ENCODE measurements at regions of chr7 and their contacts with region 1.

Region 1: DNA sequence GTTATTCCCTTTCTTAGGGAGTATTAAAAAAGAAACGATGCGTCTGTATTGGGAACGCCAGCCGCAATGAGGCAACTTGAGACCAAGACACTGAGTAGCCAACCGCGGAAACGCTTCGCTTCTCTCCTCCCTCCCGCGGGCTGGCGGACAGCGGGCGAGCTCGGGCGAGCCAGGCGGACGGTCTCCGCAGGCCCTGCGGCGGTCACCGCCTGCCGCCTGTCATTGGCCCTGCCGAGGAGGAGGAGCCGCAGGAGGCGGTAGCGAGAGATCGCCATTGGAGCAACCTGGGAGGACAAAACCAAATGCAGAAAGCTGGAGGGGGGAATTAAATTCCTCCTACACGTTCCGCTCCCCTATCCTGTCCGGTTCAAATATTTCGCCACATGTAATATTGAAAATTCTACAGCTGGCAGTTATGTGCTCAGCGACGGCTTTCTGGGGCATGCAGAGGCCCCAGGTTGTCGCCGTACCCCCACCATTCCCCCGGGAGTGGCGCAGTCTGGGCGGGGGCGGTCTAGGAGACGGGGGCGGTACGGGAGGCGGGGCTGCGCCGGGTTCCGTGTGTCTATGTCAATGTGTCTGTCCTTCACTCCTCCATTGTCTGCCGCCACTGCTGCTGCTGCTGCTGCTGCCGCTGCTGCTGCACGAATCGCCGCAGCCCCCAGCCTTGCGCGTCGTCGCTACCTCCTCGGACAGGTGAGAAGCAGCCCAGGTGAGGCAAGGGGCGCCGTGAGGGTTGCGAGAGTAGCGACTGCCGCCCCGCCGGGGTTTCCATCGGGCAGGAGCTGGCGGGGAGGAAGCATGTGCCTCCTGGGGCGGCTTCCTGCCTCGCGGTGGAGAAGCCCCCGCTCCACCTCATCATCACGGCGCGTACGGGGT is at the starts of genes ANKMY2 and BZW2:
- DNase-seq: peak; percentile 95
- H3K4me3 Mint-ChIP-seq: peak within 1 kb of the TSS; percentile 99
- H3K27ac Mint-ChIP-seq: peak within 1 kb of the TSS; percentile 98
- H3K4me1 Mint-ChIP-seq: peaks cover 53% of the 10 kb centered on the region
- H3K27me3 Mint-ChIP-seq: no peaks in the 10 kb centered on the region
- total RNA-seq, gene ANKMY2: 7.8 to 8.4 TPM
- total RNA-seq, gene BZW2: 84.2 to 89.8 TPM

Region 2: GRCh38 chr7:15686295-15686956 is 959.4 kb before region 1 on chr7 and contains the start of gene MEOX2:
- CTCF ChIA-PET with region 1: no interaction called
- POLR2A ChIA-PET with region 1: no interaction called
- intact Hi-C with region 1: no loop called
- DNase-seq: no peak
- H3K4me3 Mint-ChIP-seq: no peak within 1 kb of the TSS
- H3K27ac Mint-ChIP-seq: no peak within 1 kb of the TSS
- H3K4me1 Mint-ChIP-seq: no peaks in the 10 kb centered on the region
- H3K27me3 Mint-ChIP-seq: peaks cover 33% of the 10 kb centered on the region
- total RNA-seq, gene MEOX2: not detected

Region 3: GRCh38 chr7:16554518-16555236 is 91.2 kb before region 1 on chr7:
- CTCF ChIA-PET with region 1: no interaction called
- POLR2A ChIA-PET with region 1: no interaction called
- intact Hi-C with region 1: no loop called
- DNase-seq: no peak
- H3K4me3 Mint-ChIP-seq: no peak overlapping the region
- H3K27ac Mint-ChIP-seq: no peak overlapping the region
- H3K4me1 Mint-ChIP-seq: no peaks in the 10 kb centered on the region
- H3K27me3 Mint-ChIP-seq: no peaks in the 10 kb centered on the region

Region 4: DNA sequence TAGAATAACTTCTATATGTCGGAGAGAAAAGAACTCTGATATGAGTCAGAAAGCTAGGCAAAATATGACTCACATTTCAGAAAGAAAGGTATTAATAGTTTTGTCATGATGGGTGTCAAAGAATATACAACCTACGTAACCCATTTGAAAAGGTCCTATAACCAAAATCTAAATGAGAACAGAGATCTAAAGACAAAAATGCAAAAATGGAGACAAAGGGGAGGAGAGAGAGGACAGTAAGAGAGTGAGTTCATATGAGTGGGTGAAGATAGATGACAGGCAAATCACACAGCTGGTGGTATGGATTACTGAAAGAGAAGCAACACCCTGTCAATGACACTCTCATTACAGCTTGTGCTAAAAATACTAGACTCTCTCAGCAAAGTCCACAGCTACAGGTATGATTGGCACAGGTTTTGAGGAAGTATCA is 25.8 kb before region 1 on chr7:
- CTCF ChIA-PET with region 1: interaction called, 3 read pairs
- POLR2A ChIA-PET with region 1: interaction called, 19 read pairs
- intact Hi-C with region 1: loop called (anchors 1 kb)
- DNase-seq: no peak
- H3K4me3 Mint-ChIP-seq: peak overlapping the region; percentile 0
- H3K27ac Mint-ChIP-seq: peak overlapping the region; percentile 63
- H3K4me1 Mint-ChIP-seq: peaks cover 10% of the 10 kb centered on the region
- H3K27me3 Mint-ChIP-seq: no peaks in the 10 kb centered on the region

Region 5: GRCh38 chr7:16711730-16712129 is 65.9 kb after region 1 on chr7:
- CTCF ChIA-PET with region 1: no interaction called
- POLR2A ChIA-PET with region 1: no interaction called
- intact Hi-C with region 1: loop called (anchors 1 kb)
- DNase-seq: no peak
- H3K4me3 Mint-ChIP-seq: no peak overlapping the region
- H3K27ac Mint-ChIP-seq: peak overlapping the region; percentile 53
- H3K4me1 Mint-ChIP-seq: peaks cover 20% of the 10 kb centered on the region
- H3K27me3 Mint-ChIP-seq: no peaks in the 10 kb centered on the region

Region 6: DNA sequence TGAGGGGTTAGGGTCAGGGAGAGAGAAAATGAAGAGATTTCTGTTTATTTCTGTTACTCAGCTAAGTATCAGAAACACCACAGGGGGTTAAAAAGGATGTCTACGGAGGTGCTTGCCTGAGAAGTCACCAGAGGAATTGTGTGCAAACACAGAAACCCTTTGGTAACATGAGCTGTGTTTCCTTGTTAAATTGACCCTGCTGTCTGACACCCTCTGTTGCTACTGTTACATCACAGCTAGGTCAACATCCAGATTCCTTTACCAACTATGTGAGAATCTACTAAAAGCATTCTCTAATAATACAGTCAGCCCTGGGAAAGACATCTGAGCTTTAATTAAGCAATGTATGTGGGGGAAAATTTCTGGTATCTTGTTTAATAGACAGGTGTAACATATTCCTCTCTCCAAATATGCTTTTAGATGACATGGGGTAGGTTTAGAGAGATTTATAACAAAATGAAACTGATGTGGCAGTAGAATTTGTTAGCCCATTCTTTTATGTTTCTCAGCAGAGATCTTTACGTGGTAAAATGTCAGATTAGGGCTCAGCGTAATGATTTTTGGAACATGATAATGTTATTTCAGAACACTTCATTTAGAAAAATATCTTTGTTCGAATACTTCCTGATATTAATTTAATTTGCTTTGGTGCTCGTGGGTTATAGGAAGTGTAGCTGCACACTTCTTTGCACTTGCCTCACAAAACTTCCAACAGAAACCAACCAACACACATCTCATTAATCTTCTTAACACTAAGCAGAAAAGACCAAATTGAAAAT is 484.6 kb after region 1 on chr7:
- CTCF ChIA-PET with region 1: no interaction called
- POLR2A ChIA-PET with region 1: no interaction called
- intact Hi-C with region 1: loop called (anchors 5 kb)
- DNase-seq: no peak
- H3K4me3 Mint-ChIP-seq: no peak overlapping the region
- H3K27ac Mint-ChIP-seq: no peak overlapping the region
- H3K4me1 Mint-ChIP-seq: peaks cover 38% of the 10 kb centered on the region
- H3K27me3 Mint-ChIP-seq: peaks cover 2% of the 10 kb centered on the region

Region 7: GRCh38 chr7:17940302-17940883 is 1294.6 kb after region 1 on chr7 and contains the start of gene SNX13:
- CTCF ChIA-PET with region 1: no interaction called
- POLR2A ChIA-PET with region 1: no interaction called
- intact Hi-C with region 1: loop called (anchors 10 kb)
- DNase-seq: peak; percentile 92
- H3K4me3 Mint-ChIP-seq: peak within 1 kb of the TSS; percentile 98
- H3K27ac Mint-ChIP-seq: peak within 1 kb of the TSS; percentile 94
- H3K4me1 Mint-ChIP-seq: peaks cover 40% of the 10 kb centered on the region
- H3K27me3 Mint-ChIP-seq: no peaks in the 10 kb centered on the region
- total RNA-seq, gene SNX13: 18.6 to 19.8 TPM

Measured in activated CD4-positive, alpha-beta memory T cell treated with anti-CD3 and anti-CD28 coated beads for 36 hours (primary cell).